AG04450 (cell line): ENCODE measurements at regions of chr12 and their contacts with region 1.

Region 1: GRCh38 chr12:10182354-10183061 is 3.7 kb downstream of the TMEM52B start:
- DNase-seq: no peak
- H3K4me3 ChIP-seq: no peak overlapping the region
- H3K27ac ChIP-seq: peak overlapping the region; percentile 78
- H3K27me3 ChIP-seq: no peaks in the 10 kb centered on the region
- CTCF ChIP-seq: no peak

Region 2: GRCh38 chr12:10167588-10167987 is 14.9 kb before region 1 on chr12:
- CTCF ChIA-PET with region 1: interaction called, 3 read pairs
- POLR2A ChIA-PET with region 1: interaction called, 18 read pairs
- DNase-seq: no peak
- H3K4me3 ChIP-seq: no peak overlapping the region
- H3K27ac ChIP-seq: no peak overlapping the region
- H3K27me3 ChIP-seq: no peaks in the 10 kb centered on the region
- CTCF ChIP-seq: no peak

Region 3: DNA sequence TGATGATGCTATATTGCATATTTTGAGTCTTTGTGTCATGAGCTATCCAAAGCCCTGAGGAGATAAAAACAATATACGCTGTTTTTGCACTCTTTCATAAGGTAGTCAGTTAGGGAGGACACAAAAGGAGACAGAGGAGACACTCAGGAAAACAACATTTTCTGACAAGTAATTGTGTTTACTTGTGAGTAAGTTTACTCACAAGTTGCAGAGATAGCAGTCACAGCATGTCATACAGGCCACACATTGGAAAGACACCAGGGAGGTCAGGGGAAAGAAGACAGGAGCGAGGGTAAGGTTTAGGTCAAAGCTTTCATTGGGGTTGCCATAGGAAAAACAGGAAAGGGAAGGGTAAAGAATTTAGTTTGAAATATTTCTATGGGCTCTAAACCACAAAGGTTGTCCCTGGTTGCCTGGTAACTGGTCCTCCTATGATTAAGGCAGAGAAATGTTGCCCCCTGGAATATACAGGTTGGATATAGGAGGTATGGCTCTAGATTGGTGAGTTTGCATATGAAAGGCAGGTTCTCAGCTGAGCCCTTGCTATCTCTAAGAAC is 22.8 kb after region 1 on chr12:
- CTCF ChIA-PET with region 1: no interaction called
- POLR2A ChIA-PET with region 1: interaction called, 10 read pairs
- DNase-seq: no peak
- H3K4me3 ChIP-seq: no peak overlapping the region
- H3K27ac ChIP-seq: peak overlapping the region; percentile 22
- H3K27me3 ChIP-seq: no peaks in the 10 kb centered on the region
- CTCF ChIP-seq: no peak

Region 4: GRCh38 chr12:11171145-11171968 is 988.8 kb after region 1 on chr12 and contains the start of gene SMIM10L1:
- CTCF ChIA-PET with region 1: no interaction called
- POLR2A ChIA-PET with region 1: no interaction called
- DNase-seq: peak; percentile 88
- H3K4me3 ChIP-seq: peak within 1 kb of the TSS; percentile 94
- H3K27ac ChIP-seq: peak within 1 kb of the TSS; percentile 91
- H3K27me3 ChIP-seq: no peaks in the 10 kb centered on the region
- CTCF ChIP-seq: peak; percentile 29; the same call in 1 of the 2 replicates
- polyA plus RNA-seq, gene SMIM10L1: 4.8 and 6.4 TPM in 2 replicates